Activated B cell treated with CpG ODN at 0.5 μM for 24 hours (primary cell): ENCODE measurements at regions of chr12 and their contacts with region 1.

Region 1: DNA sequence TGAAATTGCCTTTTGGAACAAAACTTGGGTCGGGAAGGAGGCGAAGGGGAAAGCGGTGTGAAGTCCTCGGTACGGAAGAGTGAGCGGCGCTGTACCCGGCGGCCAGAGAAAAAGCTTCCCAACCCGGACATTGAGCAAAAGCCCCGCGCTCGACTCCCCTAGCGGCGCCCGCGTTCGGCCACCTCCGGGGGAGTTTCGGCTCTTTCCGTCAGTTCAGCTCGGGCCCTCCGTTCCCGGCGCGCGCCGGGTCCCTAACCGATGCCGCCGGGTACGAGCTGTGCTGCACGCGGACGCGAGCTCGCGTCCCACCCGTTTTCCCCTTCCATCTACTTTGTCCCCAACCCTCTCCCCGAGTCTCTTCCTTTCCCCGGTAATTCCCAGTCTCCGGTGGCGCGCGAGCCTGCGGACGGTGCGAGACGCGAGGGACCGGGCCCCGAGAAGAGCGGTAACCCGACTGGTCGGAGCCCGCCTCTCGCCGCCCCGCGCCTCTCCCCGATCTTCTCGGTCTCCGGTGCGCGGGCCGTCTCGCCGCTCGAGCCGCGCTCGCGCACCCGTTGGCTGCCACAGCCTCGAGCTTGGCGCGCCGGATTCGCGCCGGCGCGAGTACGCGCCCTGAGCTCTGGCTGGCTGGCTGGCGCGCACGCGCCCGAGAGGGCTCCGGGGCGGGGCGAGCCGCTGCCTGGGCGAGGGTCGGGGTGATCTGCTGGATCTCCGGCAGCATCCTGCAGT is 446 bp upstream of the SPATS2 start:
- DNase-seq: peak; percentile 87
- ATAC-seq: peak; percentile 80
- H3K4me3 Mint-ChIP-seq: peak overlapping the region; percentile 99
- H3K27ac Mint-ChIP-seq: peak overlapping the region; percentile 98
- H3K4me1 Mint-ChIP-seq: peaks cover 51% of the 10 kb centered on the region
- H3K27me3 Mint-ChIP-seq: no peaks in the 10 kb centered on the region
- CTCF ChIP-seq: no peak

Region 2: GRCh38 chr12:49264738-49265515 is 101.9 kb before region 1 on chr12 and contains the start of gene TUBA1C:
- CTCF ChIA-PET with region 1: no interaction called
- POLR2A ChIA-PET with region 1: interaction called, 11 read pairs
- intact Hi-C with region 1: no loop called
- DNase-seq: peak; percentile 90
- ATAC-seq: peak; percentile 90
- H3K4me3 Mint-ChIP-seq: peak within 1 kb of the TSS; percentile 94
- H3K27ac Mint-ChIP-seq: peak within 1 kb of the TSS; percentile 92
- H3K4me1 Mint-ChIP-seq: peaks cover 20% of the 10 kb centered on the region
- H3K27me3 Mint-ChIP-seq: no peaks in the 10 kb centered on the region
- CTCF ChIP-seq: no peak
- total RNA-seq, gene TUBA1C: 141 and 142 TPM in 2 replicates

Region 3: DNA sequence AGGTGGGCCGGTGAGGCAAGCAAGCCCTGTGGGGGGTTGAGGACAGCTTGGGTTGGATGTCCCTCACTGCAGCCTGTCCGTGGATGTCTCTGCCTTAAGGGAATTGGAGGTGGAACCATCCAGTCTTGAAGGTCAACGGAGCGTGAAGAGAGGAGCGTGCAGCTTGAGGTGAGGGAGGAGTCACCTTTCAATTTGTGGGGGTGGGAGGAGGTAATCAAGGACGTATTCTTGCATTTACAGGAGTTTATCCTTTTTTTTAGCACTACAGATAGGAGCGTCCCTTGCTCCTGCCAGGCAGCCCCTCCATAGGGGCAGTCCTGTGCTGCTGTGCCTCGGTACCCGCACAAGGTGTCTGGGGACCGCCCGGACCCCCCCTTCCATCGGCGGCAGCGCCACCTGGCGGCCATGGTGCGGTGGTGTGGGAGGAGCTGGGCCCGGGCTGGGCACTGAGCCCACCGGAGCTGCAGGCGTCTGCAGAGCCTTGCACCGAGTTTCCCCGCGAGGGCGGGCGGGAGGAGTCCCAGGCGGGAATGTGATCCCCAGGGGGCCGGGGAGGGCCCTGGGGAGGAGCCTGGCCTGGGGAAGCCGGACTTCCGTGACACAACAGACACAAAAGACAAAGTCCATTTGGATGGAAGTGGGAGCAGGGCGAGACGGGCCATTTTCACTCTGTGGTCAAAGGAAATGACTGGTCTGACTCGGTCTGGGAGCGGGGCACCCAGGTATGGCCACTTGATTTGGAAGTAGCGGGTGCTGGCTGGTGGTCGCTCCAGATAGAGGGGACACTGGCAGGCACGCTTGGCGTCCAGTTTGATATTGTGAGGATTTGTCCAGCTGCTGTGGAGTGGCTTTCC is 19.2 kb before region 1 on chr12:
- CTCF ChIA-PET with region 1: interaction called, 18 read pairs
- POLR2A ChIA-PET with region 1: interaction called, 9 read pairs
- intact Hi-C with region 1: loop called (anchors 2 kb)
- DNase-seq: peak; percentile 78
- ATAC-seq: peak; percentile 69
- H3K4me3 Mint-ChIP-seq: peak overlapping the region; percentile 79
- H3K27ac Mint-ChIP-seq: no peak overlapping the region
- H3K4me1 Mint-ChIP-seq: peaks cover 46% of the 10 kb centered on the region
- H3K27me3 Mint-ChIP-seq: peaks cover 49% of the 10 kb centered on the region
- CTCF ChIP-seq: peak; percentile 97

Region 4: GRCh38 chr12:49428793-49429192 is 62.0 kb after region 1 on chr12:
- CTCF ChIA-PET with region 1: no interaction called
- POLR2A ChIA-PET with region 1: interaction called, 17 read pairs
- intact Hi-C with region 1: loop called (anchors 2 kb)
- DNase-seq: no peak
- ATAC-seq: peak; percentile 69
- H3K4me3 Mint-ChIP-seq: peak overlapping the region; percentile 24
- H3K27ac Mint-ChIP-seq: peak overlapping the region; percentile 89
- H3K4me1 Mint-ChIP-seq: peaks cover 24% of the 10 kb centered on the region
- H3K27me3 Mint-ChIP-seq: no peaks in the 10 kb centered on the region
- CTCF ChIP-seq: no peak

Region 5: GRCh38 chr12:49491823-49492222 is 125.0 kb after region 1 on chr12:
- CTCF ChIA-PET with region 1: no interaction called
- POLR2A ChIA-PET with region 1: no interaction called
- intact Hi-C with region 1: no loop called
- DNase-seq: no peak
- ATAC-seq: no peak
- H3K4me3 Mint-ChIP-seq: no peak overlapping the region
- H3K27ac Mint-ChIP-seq: no peak overlapping the region
- H3K4me1 Mint-ChIP-seq: no peaks in the 10 kb centered on the region
- H3K27me3 Mint-ChIP-seq: no peaks in the 10 kb centered on the region
- CTCF ChIP-seq: no peak

Region 6: DNA sequence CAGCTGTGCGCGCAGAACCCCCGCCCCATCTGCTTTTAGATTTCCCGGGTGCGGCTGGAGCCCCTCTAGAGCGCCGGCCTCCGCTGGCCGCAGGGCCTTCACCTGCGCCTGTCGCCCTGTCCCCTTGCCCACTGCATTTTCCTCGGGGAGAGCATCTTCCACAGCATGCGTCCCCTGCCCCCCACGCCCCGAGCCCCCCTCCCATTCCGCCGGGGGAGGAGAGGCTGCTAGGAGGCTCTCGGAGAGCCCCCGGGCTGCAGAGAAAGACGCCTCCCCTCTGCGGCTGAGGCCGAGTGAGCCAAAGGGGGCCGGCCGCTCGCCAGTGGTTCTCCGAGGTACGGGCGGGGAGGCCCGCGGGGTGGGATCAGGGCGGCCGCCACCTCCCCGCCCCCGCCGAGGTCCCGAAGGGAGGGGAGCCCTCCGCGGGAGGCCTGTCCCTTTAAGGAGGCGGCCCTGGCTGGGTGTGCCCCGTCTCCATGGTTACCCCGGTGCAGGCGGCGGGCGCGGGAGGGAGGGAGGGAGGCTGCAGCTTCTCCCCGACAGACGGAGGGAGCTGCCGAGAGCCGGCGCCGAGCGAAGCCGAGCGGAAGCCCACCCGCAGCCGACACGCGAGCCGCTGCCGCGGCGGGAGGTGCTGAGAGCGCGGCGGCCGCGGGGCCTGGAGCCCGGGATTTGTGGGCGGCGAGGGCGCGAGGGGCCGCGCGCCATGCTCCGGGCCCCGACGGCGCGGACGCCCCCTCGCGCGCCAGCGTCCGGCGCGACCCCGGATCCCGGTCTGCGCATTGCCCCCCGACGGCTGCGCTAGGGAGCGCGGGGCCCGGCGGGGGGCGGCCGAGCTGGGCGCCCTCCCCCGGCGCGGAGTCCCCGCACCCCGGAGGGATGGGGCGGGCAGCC is 171.9 kb after region 1 on chr12 and contains the start of gene KCNH3:
- CTCF ChIA-PET with region 1: interaction called, 3 read pairs
- POLR2A ChIA-PET with region 1: interaction called, 3 read pairs
- intact Hi-C with region 1: loop called (anchors 1 kb)
- DNase-seq: peak; percentile 63
- ATAC-seq: peak; percentile 86
- H3K4me3 Mint-ChIP-seq: peak within 1 kb of the TSS; percentile 79
- H3K27ac Mint-ChIP-seq: no peak within 1 kb of the TSS
- H3K4me1 Mint-ChIP-seq: peaks cover 43% of the 10 kb centered on the region
- H3K27me3 Mint-ChIP-seq: peaks cover 28% of the 10 kb centered on the region
- CTCF ChIP-seq: no peak
- total RNA-seq, gene KCNH3: 0.27 and 0.44 TPM in 2 replicates

Region 7: GRCh38 chr12:49687941-49688340 is 321.1 kb after region 1 on chr12:
- CTCF ChIA-PET with region 1: no interaction called
- POLR2A ChIA-PET with region 1: no interaction called
- intact Hi-C with region 1: no loop called
- DNase-seq: no peak
- ATAC-seq: no peak
- H3K4me3 Mint-ChIP-seq: no peak overlapping the region
- H3K27ac Mint-ChIP-seq: peak overlapping the region; percentile 0
- H3K4me1 Mint-ChIP-seq: peaks cover 71% of the 10 kb centered on the region
- H3K27me3 Mint-ChIP-seq: no peaks in the 10 kb centered on the region
- CTCF ChIP-seq: no peak

Region 8: GRCh38 chr12:49698619-49699545 is 332.1 kb after region 1 on chr12:
- CTCF ChIA-PET with region 1: no interaction called
- POLR2A ChIA-PET with region 1: no interaction called
- intact Hi-C with region 1: loop called (anchors 2 kb)
- DNase-seq: peak; percentile 57
- ATAC-seq: peak; percentile 82
- H3K4me3 Mint-ChIP-seq: peak overlapping the region; percentile 84
- H3K27ac Mint-ChIP-seq: peak overlapping the region; percentile 96
- H3K4me1 Mint-ChIP-seq: peaks cover 83% of the 10 kb centered on the region
- H3K27me3 Mint-ChIP-seq: no peaks in the 10 kb centered on the region
- CTCF ChIP-seq: no peak